GM10248 (cell line): ENCODE measurements at regions of chr12 and their contacts with region 1.

Region 1: DNA sequence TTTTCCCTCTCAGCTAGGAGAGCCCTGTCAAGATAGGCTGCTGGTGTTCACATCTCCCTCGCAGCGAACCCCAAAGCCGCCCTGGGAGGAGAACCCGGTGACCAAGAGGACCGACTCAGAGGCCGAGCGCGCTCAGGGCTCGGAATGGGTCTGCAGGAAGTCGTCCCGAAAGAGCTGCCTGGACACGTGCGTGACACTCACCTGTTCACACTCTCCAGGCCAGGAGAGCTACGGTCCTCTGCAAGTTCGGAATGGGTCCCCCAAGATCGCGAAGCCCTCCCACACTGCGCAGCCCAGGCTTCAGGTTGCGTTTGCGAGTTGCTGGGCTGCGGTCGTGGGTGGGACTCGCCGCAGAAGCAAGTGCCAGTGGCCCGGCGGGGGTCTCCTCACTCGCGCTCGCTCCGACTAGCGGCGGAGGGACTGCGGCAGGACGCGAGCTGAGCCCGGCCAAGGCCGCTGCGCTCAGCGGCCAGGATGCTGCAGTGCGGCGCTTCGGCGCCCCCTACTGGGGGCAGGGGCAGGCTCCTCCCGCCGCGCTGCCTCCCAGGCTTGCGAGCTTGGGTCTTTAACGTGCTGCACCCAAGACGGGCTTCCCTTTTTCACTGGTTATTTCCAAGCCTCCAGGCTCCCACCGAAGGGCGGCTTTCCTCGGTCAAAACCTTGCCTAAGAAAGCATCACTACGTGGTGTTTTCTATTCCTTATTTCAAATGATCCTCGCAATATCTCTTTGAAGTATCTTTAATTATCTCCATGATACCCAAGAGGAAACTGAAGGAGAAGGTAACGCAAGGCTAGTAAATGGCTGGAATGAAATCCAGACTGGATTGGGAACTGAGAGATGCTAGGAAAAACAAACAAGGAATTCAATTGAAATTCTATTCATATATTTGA is at the start of gene RERG:
- DNase-seq: peak; percentile 80
- CTCF ChIP-seq: peak; percentile 86

Region 2: DNA sequence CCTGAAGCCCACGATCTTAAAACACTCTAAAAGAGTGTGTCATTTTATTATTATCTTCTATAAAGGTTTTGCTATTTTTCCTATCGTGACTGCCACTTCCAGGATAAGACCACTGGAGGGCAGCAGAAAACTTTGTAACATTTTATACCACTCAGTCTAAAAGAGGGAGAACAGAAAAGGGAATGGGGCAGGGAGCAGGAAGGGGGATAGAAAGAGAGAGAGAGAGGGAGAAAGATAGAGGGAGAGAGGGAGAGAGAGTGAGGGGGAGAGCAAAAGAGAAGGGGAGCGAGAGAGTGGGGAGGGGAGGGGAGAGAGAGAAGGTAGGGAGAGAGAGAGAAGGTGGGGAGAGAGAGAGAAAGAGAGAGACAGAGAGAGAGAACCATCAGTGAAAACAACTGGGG is 375.9 kb before region 1 on chr12:
- CTCF ChIA-PET with region 1: interaction called, 16 read pairs
- POLR2A ChIA-PET with region 1: no interaction called
- DNase-seq: peak; percentile 64
- CTCF ChIP-seq: peak; percentile 71

Region 3: GRCh38 chr12:15196678-15197505 is 24.3 kb before region 1 on chr12:
- CTCF ChIA-PET with region 1: interaction called, 13 read pairs
- POLR2A ChIA-PET with region 1: no interaction called
- DNase-seq: no peak
- CTCF ChIP-seq: no peak

Region 4: GRCh38 chr12:15244341-15244740 is 23.1 kb after region 1 on chr12:
- CTCF ChIA-PET with region 1: interaction called, 10 read pairs
- POLR2A ChIA-PET with region 1: no interaction called
- DNase-seq: no peak
- CTCF ChIP-seq: no peak